Caco-2 (cell line): ENCODE measurements at regions of chr11 and their contacts with region 1.

Region 1: DNA sequence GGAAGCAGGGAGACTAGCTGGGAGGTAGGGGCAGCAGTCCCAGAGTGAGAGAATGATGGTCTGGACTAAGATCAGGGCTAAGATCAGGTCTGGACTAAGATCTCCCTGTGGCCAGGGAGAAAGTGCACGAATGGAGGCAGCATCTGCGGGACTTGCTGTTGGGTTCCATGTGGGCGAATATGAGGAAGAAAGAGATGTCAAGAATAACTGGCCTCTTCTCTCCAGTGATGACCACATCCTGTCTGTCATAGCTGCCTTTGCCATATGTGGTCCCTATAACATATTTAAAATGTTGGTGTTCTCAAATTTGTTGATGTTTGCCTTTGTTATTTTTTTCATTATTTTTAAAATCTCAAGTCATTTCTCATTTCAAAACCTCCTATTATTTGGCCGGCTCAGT is 27.4 kb upstream of the CXCR5 start:
- DNase-seq: no peak
- H3K4me3 ChIP-seq: no peak overlapping the region
- H3K4me3 Mint-ChIP-seq: no peak overlapping the region
- H3K27ac Mint-ChIP-seq: no peak overlapping the region
- H3K4me1 ChIP-seq: no peaks in the 10 kb centered on the region
- H3K4me1 Mint-ChIP-seq: no peaks in the 10 kb centered on the region
- H3K27me3 ChIP-seq: no peaks in the 10 kb centered on the region
- H3K27me3 Mint-ChIP-seq: no peaks in the 10 kb centered on the region
- CTCF ChIP-seq: no peak

Region 2: DNA sequence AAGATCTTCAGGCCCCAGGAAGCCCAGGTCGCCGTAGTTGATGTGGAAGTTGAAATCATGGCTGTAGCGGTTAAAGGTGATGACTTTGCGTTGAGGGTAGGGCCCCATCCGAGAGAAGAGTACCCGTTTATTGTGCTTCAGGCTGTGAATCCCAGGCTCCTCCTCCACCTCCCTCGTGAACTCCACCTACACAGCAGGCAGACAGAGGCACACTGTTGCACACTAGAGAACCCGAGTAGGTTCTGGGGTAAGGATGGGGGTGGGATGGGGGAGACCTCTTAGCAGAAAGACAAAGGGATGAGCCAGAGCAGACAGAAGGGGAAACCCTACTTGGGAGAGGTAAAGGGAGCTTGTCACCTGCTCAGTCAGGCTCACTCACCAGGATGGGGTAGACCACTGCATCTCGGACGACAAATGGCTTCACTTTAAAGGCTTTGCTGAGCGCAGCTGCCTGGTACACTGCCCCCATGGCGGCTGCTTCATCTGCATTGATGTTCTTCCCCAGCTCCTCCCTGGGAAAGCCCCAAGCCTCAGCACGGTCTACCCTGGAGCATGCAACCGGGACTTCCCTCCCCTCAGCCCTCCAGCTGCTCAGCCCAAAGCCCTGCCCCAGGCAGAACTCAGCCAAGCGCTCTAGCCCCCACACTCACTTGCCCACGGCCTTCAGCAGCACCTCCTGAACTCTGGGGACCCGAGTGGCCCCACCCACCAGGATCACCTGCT is 195.3 kb after region 1 on chr11:
- CTCF ChIA-PET with region 1: no interaction called
- POLR2A ChIA-PET with region 1: interaction called, 13 read pairs
- intact Hi-C with region 1: no loop called
- DNase-seq: no peak
- H3K4me3 ChIP-seq: no peak overlapping the region
- H3K4me3 Mint-ChIP-seq: no peak overlapping the region
- H3K27ac Mint-ChIP-seq: no peak overlapping the region
- H3K4me1 ChIP-seq: peaks cover 5% of the 10 kb centered on the region; the same call in 1 of the 2 replicates
- H3K4me1 Mint-ChIP-seq: peaks cover 8% of the 10 kb centered on the region
- H3K27me3 ChIP-seq: no peaks in the 10 kb centered on the region
- H3K27me3 Mint-ChIP-seq: no peaks in the 10 kb centered on the region
- CTCF ChIP-seq: no peak

Region 3: GRCh38 chr11:119062779-119063178 is 206.5 kb after region 1 on chr11:
- CTCF ChIA-PET with region 1: no interaction called
- POLR2A ChIA-PET with region 1: no interaction called
- intact Hi-C with region 1: no loop called
- DNase-seq: no peak
- H3K4me3 ChIP-seq: no peak overlapping the region
- H3K4me3 Mint-ChIP-seq: no peak overlapping the region
- H3K27ac Mint-ChIP-seq: no peak overlapping the region
- H3K4me1 ChIP-seq: peaks cover 5% of the 10 kb centered on the region; the same call in 1 of the 2 replicates
- H3K4me1 Mint-ChIP-seq: peaks cover 20% of the 10 kb centered on the region
- H3K27me3 ChIP-seq: no peaks in the 10 kb centered on the region
- H3K27me3 Mint-ChIP-seq: no peaks in the 10 kb centered on the region
- CTCF ChIP-seq: no peak